Activated CD4-positive, alpha-beta T cell treated with anti-CD3 and anti-CD28 coated beads, Interleukin-2, amount 10 ng/mL, durations not matched to agents 7 days and 5 days (primary cell): ENCODE measurements at regions of chr15 and their contacts with region 1.

Region 1: GRCh38 chr15:75625542-75626347 is at the start of gene SNUPN:
- DNase-seq: peak; percentile 95
- H3K4me3 Mint-ChIP-seq: peak within 1 kb of the TSS; percentile 85
- H3K27ac Mint-ChIP-seq: peak within 1 kb of the TSS; percentile 96
- H3K4me1 Mint-ChIP-seq: peaks cover 46% of the 10 kb centered on the region
- H3K27me3 Mint-ChIP-seq: no peaks in the 10 kb centered on the region
- total RNA-seq, gene SNUPN: 41.9 to 44.1 TPM

Region 2: DNA sequence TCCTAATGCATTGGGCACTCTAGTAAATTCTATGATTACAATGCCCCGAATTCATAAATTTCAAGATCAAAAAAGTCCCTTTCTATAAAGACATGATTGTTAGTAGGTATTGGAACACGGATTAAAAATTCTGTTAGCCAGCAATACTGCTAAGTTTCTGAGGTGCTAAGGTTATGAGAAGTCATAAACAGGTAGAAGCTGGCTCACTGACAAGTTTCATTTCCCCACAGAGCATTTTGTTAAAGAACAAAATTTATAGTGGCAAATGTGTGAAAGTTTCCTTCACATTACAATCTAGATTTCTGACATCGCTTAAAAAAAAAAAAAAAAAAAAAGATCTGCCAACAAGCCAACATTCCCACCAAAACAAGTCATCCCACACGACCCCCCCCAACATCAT is 245.0 kb before region 1 on chr15:
- CTCF ChIA-PET with region 1: no interaction called
- POLR2A ChIA-PET with region 1: no interaction called
- DNase-seq: no peak
- H3K4me3 Mint-ChIP-seq: no peak overlapping the region
- H3K27ac Mint-ChIP-seq: no peak overlapping the region
- H3K4me1 Mint-ChIP-seq: peaks cover 4% of the 10 kb centered on the region
- H3K27me3 Mint-ChIP-seq: no peaks in the 10 kb centered on the region

Region 3: GRCh38 chr15:75578948-75579920 is 46.5 kb before region 1 on chr15 and contains the start of gene PTPN9:
- CTCF ChIA-PET with region 1: interaction called, 15 read pairs
- POLR2A ChIA-PET with region 1: interaction called, 4 read pairs
- DNase-seq: peak; percentile 78
- H3K4me3 Mint-ChIP-seq: peak within 1 kb of the TSS; percentile 92
- H3K27ac Mint-ChIP-seq: peak within 1 kb of the TSS; percentile 95
- H3K4me1 Mint-ChIP-seq: peaks cover 19% of the 10 kb centered on the region
- H3K27me3 Mint-ChIP-seq: no peaks in the 10 kb centered on the region
- total RNA-seq, gene PTPN9: 37.0 to 37.4 TPM

Region 4: GRCh38 chr15:75639709-75640482 is 14.2 kb after region 1 on chr15 and contains the start of gene IMP3:
- CTCF ChIA-PET with region 1: interaction called, 28 read pairs
- POLR2A ChIA-PET with region 1: interaction called, 13 read pairs
- DNase-seq: peak; percentile 97
- H3K4me3 Mint-ChIP-seq: peak within 1 kb of the TSS; percentile 86
- H3K27ac Mint-ChIP-seq: peak within 1 kb of the TSS; percentile 95
- H3K4me1 Mint-ChIP-seq: peaks cover 39% of the 10 kb centered on the region
- H3K27me3 Mint-ChIP-seq: peaks cover under 1% of the 10 kb centered on the region
- total RNA-seq, gene IMP3: 79.1 to 81.4 TPM

Region 5: GRCh38 chr15:75651277-75652033 is 25.7 kb after region 1 on chr15:
- CTCF ChIA-PET with region 1: no interaction called
- POLR2A ChIA-PET with region 1: no interaction called
- DNase-seq: no peak
- H3K4me3 Mint-ChIP-seq: no peak overlapping the region
- H3K27ac Mint-ChIP-seq: no peak overlapping the region
- H3K4me1 Mint-ChIP-seq: peaks cover 26% of the 10 kb centered on the region
- H3K27me3 Mint-ChIP-seq: peaks cover 16% of the 10 kb centered on the region